ENCODE measurements at regions of chr17 and their contacts with region 1.

Region 1: GRCh38 chr17:77444984-77445759 is 304.4 kb downstream of the SEC14L1 start:
- DNase-seq: peak; percentile 90
- H3K4me3 Mint-ChIP-seq: peak overlapping the region; percentile 78
- H3K27ac Mint-ChIP-seq: peak overlapping the region; percentile 96
- H3K4me1 Mint-ChIP-seq: peaks cover 97% of the 10 kb centered on the region
- H3K27me3 Mint-ChIP-seq: no peaks in the 10 kb centered on the region

Region 2: GRCh38 chr17:77280980-77281903 is 163.9 kb before region 1 on chr17:
- CTCF ChIA-PET with region 1: no interaction called
- POLR2A ChIA-PET with region 1: no interaction called
- DNase-seq: peak; percentile 57
- H3K4me3 Mint-ChIP-seq: peak overlapping the region; percentile 61
- H3K27ac Mint-ChIP-seq: peak overlapping the region; percentile 47
- H3K4me1 Mint-ChIP-seq: peaks cover 15% of the 10 kb centered on the region
- H3K27me3 Mint-ChIP-seq: peaks cover 43% of the 10 kb centered on the region

Region 3: GRCh38 chr17:77372444-77373298 is 72.5 kb before region 1 on chr17:
- CTCF ChIA-PET with region 1: interaction called, 4 read pairs
- POLR2A ChIA-PET with region 1: interaction called, 16 read pairs
- DNase-seq: peak; percentile 81
- H3K4me3 Mint-ChIP-seq: peak overlapping the region; percentile 74
- H3K27ac Mint-ChIP-seq: peak overlapping the region; percentile 82
- H3K4me1 Mint-ChIP-seq: peaks cover 51% of the 10 kb centered on the region
- H3K27me3 Mint-ChIP-seq: peaks cover 3% of the 10 kb centered on the region

Region 4: DNA sequence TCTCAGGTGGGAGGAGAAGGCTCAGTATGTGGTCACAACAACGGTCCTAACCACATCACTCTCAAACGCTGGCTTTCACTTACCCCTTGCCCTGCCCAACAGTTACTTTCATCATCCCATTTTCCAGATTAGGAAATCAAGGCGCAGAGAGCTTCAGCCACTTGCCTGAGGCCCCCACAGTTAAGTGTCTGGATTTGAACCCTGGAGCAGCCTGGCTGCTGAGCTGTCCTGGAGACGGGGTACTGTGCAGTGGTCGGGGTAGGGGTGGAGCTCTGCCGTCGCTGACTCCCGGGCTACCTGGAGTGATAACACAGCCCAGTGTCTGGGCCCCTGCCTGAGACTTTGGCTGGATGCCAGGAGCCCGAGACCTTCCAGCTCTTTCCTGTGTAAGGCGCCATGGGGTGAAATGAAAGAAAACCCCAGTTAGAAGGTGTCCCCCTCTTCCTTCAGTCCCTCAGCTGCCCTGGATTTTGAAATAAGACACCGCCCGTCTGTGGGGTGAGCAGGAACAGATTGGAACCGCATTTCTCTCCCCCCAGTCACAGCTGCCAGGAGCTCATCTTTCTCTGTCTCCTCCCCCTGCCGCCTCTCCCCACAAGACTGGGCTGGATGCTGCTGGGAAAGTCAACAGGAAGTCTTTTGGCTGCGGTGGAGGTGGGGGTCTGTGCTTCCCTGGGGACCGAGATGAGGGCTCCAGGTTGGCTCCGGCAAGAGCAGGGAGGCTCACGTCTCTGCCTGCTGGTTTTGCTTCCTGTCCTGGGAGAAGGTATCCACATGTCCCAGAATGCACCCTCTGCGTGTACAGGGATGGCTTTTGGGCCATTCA is 24.2 kb before region 1 on chr17:
- CTCF ChIA-PET with region 1: no interaction called
- POLR2A ChIA-PET with region 1: interaction called, 10 read pairs
- DNase-seq: peak; percentile 38
- H3K4me3 Mint-ChIP-seq: peak overlapping the region; percentile 51
- H3K27ac Mint-ChIP-seq: peak overlapping the region; percentile 61
- H3K4me1 Mint-ChIP-seq: peaks cover 50% of the 10 kb centered on the region
- H3K27me3 Mint-ChIP-seq: no peaks in the 10 kb centered on the region

Region 5: GRCh38 chr17:77465358-77466041 is 20.3 kb after region 1 on chr17:
- CTCF ChIA-PET with region 1: interaction called, 13 read pairs
- POLR2A ChIA-PET with region 1: interaction called, 164 read pairs
- DNase-seq: peak; percentile 87
- H3K4me3 Mint-ChIP-seq: peak overlapping the region; percentile 59
- H3K27ac Mint-ChIP-seq: peak overlapping the region; percentile 86
- H3K4me1 Mint-ChIP-seq: peaks cover 84% of the 10 kb centered on the region
- H3K27me3 Mint-ChIP-seq: no peaks in the 10 kb centered on the region

Region 6: DNA sequence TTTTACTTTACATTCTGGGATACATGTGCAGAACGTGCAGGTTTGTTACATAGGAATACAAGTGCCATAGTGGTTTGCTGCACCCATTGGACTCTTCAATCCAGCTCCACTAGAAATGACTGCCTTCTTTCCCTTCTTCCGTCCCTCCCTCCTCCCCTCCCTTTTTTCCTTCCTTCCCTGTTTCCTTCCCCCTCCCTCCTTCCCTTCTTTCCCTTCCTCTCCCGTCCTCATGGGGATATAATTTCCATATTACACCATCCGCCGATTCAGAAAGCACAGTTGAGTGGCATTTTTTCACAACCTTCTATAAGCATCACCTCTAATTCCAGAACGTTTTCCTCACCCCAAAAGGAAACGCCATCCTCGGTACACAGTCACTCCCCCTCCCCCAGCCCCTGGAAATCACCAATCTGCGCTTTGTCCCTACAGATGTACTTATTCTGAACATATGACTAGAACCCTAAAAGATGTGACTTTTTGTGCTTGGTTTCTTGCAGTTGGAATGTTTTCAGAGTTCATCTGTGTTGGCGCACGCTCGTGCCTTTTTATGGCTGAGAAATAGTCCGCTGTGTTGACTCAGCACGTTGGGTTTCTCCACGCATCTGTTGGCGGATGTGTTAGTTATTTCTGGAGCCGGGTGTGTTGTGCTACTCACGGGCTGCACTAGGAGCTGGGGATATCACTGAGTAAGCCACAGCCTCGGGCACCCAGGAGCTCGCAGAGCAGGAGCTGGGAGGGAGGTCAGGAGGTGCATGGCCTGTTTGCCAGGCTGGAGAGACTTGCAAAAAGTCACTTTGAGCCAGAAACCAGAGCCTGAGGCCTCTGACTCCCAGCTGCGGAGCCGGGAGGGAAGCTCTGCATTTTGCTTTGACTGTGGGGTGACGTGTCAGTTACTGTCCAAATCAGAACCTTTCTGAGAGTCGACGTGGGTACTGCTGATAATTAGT is 32.0 kb after region 1 on chr17:
- CTCF ChIA-PET with region 1: interaction called, 11 read pairs
- POLR2A ChIA-PET with region 1: interaction called, 71 read pairs
- DNase-seq: no peak
- H3K4me3 Mint-ChIP-seq: no peak overlapping the region
- H3K27ac Mint-ChIP-seq: peak overlapping the region; percentile 40
- H3K4me1 Mint-ChIP-seq: peaks cover 69% of the 10 kb centered on the region
- H3K27me3 Mint-ChIP-seq: no peaks in the 10 kb centered on the region